T-cell (primary cell): ENCODE measurements at regions of chr1 and their contacts with region 1.

Region 1: GRCh38 chr1:40032240-40032891 is 8.2 kb upstream of the CAP1 start:
- DNase-seq: peak in 29 of 35 experiments; percentile 21 to 77 (median 43)
- ATAC-seq: peak; percentile 57 to 66 (median 62)
- H3K4me3 ChIP-seq: no peak overlapping the region
- H3K4me3 Mint-ChIP-seq: no peak overlapping the region
- H3K27ac ChIP-seq: no peak overlapping the region
- H3K27ac Mint-ChIP-seq: peak overlapping the region; percentile 41 to 79
- H3K4me1 ChIP-seq: peaks cover 25 to 34% of the 10 kb centered on the region in 2 experiments
- H3K4me1 Mint-ChIP-seq: peaks cover 43 to 61% (median 50%) of the 10 kb centered on the region in 3 donors
- H3K27me3 ChIP-seq: no peaks in the 10 kb centered on the region
- H3K27me3 Mint-ChIP-seq: no peaks in the 10 kb centered on the region

Region 2: DNA sequence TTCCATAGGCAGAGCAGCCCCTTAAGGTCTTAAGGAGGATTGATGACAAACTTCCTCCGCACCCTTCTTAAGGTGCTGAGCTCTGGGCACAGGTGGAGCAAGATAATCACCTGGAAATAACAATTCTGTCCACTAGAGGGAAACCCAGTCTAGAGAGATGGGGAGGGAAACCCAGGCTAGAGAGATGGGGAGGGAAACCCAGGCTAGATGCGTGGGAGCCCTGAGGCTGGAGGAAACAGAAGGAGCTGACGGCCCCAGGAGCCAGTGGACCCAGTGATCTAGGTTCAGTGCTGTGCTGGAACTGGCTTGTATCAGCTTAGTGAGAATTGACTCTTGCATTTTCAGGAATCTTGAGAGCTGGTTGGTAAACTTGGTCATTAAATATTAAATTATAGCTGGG is 112.8 kb before region 1 on chr1:
- CTCF ChIA-PET with region 1: interaction called, 12 to 52 read pairs
- POLR2A ChIA-PET with region 1: interaction called in 1 of 2 experiments, 3 read pairs
- DNase-seq: peak in 26 of 35 experiments; percentile 2 to 80 (median 24)
- ATAC-seq: peak; percentile 91 to 98 (median 94)
- H3K4me3 ChIP-seq: no peak overlapping the region
- H3K4me3 Mint-ChIP-seq: no peak overlapping the region
- H3K27ac ChIP-seq: no peak overlapping the region
- H3K27ac Mint-ChIP-seq: no peak overlapping the region
- H3K4me1 ChIP-seq: no peaks in the 10 kb centered on the region
- H3K4me1 Mint-ChIP-seq: peaks cover 0 to 2% (median 0%) of the 10 kb centered on the region in 3 donors
- H3K27me3 ChIP-seq: peaks cover 0 to 20% of the 10 kb centered on the region in 2 experiments
- H3K27me3 Mint-ChIP-seq: peaks cover 4 to 5% of the 10 kb centered on the region in 2 donors

Region 3: DNA sequence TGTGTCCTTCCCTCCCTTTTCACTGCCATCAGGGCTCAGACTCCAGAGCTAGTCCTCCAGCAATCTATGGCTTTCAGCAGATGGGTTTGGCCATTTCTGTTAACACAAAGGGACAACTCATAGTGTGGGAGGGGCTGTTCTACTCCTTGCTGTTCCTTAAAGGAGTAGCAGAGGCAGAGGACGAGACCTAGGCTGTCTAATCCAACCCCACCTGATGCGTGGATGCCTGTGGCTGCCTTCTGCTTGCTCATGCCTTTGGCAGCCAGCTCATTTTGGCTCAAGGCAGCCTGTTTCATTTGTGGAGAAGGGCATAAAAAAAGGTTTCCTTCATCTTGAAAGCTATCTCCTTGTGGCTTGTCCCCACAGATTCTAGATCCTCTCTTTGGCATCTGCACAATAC is 50.4 kb before region 1 on chr1:
- CTCF ChIA-PET with region 1: no interaction called
- POLR2A ChIA-PET with region 1: no interaction called
- DNase-seq: no peak
- ATAC-seq: no peak
- H3K4me3 ChIP-seq: no peak overlapping the region
- H3K4me3 Mint-ChIP-seq: no peak overlapping the region
- H3K27ac ChIP-seq: no peak overlapping the region
- H3K27ac Mint-ChIP-seq: no peak overlapping the region
- H3K4me1 ChIP-seq: no peaks in the 10 kb centered on the region
- H3K4me1 Mint-ChIP-seq: no peaks in the 10 kb centered on the region
- H3K27me3 ChIP-seq: no peaks in the 10 kb centered on the region
- H3K27me3 Mint-ChIP-seq: no peaks in the 10 kb centered on the region

Region 4: GRCh38 chr1:40014812-40015594 is 17.4 kb before region 1 on chr1:
- CTCF ChIA-PET with region 1: interaction called in 1 of 2 experiments, 11 read pairs
- POLR2A ChIA-PET with region 1: interaction called in 1 of 2 experiments, 5 read pairs
- DNase-seq: no peak
- ATAC-seq: no peak
- H3K4me3 ChIP-seq: no peak overlapping the region
- H3K4me3 Mint-ChIP-seq: no peak overlapping the region
- H3K27ac ChIP-seq: no peak overlapping the region
- H3K27ac Mint-ChIP-seq: peak overlapping the region; percentile 36 to 48
- H3K4me1 ChIP-seq: peaks cover 7 to 10% of the 10 kb centered on the region in 2 experiments
- H3K4me1 Mint-ChIP-seq: peaks cover 14 to 23% (median 15%) of the 10 kb centered on the region in 3 donors
- H3K27me3 ChIP-seq: no peaks in the 10 kb centered on the region
- H3K27me3 Mint-ChIP-seq: no peaks in the 10 kb centered on the region

Region 5: DNA sequence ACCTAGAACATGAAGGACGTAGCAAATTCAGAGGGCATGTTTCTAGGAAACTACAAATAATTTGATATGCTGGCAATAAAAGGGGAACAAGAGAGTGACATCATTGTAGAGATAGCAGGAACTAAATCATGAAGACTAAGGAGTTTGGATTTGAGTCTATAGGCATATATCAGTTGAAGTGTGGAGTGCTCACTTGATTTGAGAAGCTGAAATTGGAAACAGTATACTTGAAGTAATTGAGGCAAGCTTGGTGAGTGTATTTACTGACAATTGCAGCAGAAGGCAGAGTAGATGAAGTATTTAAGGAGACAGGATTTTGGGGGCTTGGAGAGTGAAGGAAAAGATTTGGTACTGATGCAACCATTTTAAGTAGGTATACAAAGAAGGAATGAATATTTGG is 209.0 kb after region 1 on chr1:
- CTCF ChIA-PET with region 1: no interaction called
- POLR2A ChIA-PET with region 1: no interaction called
- DNase-seq: no peak
- ATAC-seq: peak in 1 of 4 experiments; percentile 38
- H3K4me3 ChIP-seq: no peak overlapping the region
- H3K4me3 Mint-ChIP-seq: no peak overlapping the region
- H3K27ac ChIP-seq: peak overlapping the region; percentile 61
- H3K27ac Mint-ChIP-seq: peak overlapping the region; percentile 77 to 81
- H3K4me1 ChIP-seq: peaks cover 2 to 5% of the 10 kb centered on the region in 2 experiments
- H3K4me1 Mint-ChIP-seq: peaks cover 14 to 17% (median 16%) of the 10 kb centered on the region in 3 donors
- H3K27me3 ChIP-seq: no peaks in the 10 kb centered on the region
- H3K27me3 Mint-ChIP-seq: no peaks in the 10 kb centered on the region